A549 (cell line): ENCODE measurements at regions of chrX and their contacts with region 1.

Region 1: DNA sequence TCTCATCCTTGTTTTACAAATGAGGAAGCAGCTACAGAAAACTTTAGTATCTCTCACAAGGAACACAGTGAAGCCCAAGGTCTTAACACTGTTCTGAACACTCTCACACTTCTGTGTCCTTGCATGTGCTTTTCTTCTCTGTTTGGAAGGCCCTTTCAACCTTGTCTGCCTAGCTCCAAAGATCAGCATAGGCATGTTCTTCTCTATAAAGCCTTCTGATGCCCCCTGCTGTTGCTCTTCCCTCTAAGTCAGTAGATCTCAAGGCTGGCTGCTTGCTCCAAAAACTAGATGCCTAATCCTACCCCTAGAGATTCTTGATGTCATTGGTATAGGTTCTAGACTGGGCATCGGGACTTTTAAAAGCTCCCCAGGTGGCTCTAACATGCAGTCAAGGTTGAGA is 5.9 kb downstream of the APOO start:
- DNase-seq: peak; percentile 62 to 92
- ATAC-seq: peak; percentile 83 to 84
- H3K4me3 ChIP-seq: peak overlapping the region; percentile 22; the same call in 2 of the 3 replicates
- H3K27ac ChIP-seq: peak overlapping the region; percentile 91 to 95
- H3K4me1 ChIP-seq: peaks cover 66% of the 10 kb centered on the region
- CTCF ChIP-seq: peak; percentile 67
- EP300 ChIP-seq: no peak
- POLR2A ChIP-seq: no peak
- RAD21 ChIP-seq: peak; percentile 90 to 92

Region 2: DNA sequence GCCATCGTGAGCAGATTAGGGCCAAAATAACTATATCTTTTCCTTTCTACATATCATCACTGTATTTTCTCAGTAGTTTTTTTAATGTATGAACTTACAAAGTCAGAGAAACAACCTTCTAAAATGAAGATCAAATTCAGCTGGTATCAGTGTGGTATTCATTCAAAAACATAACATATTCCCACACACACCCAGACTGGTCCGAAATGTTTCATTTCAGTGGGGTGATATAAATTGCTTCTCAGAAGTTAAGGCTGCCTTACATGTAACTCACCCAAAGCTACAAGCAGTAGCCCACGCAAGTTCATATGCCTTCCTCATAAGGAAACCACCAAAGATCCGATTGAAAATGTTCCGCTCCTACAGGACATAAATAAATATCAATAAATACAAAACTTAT is 196.6 kb before region 1 on chrX:
- CTCF ChIA-PET with region 1: interaction called, 312 read pairs
- POLR2A ChIA-PET with region 1: no interaction called
- DNase-seq: no peak
- ATAC-seq: no peak
- H3K4me3 ChIP-seq: no peak overlapping the region
- H3K27ac ChIP-seq: no peak overlapping the region
- H3K4me1 ChIP-seq: no peaks in the 10 kb centered on the region
- CTCF ChIP-seq: no peak
- EP300 ChIP-seq: no peak
- POLR2A ChIP-seq: no peak
- RAD21 ChIP-seq: no peak

Region 3: GRCh38 chrX:23742697-23743622 is 158.8 kb before region 1 on chrX and contains the start of gene ACOT9:
- CTCF ChIA-PET with region 1: interaction called, 35 read pairs
- POLR2A ChIA-PET with region 1: interaction called, 22 read pairs
- DNase-seq: peak; percentile 89 to 98
- ATAC-seq: peak; percentile 98
- H3K4me3 ChIP-seq: peak within 1 kb of the TSS; percentile 80
- H3K27ac ChIP-seq: peak within 1 kb of the TSS; percentile 91 to 93
- H3K4me1 ChIP-seq: peaks cover 20% of the 10 kb centered on the region
- CTCF ChIP-seq: no peak
- EP300 ChIP-seq: no peak
- POLR2A ChIP-seq: peak; percentile 65
- RAD21 ChIP-seq: no peak
- polyA plus RNA-seq, gene ACOT9: 83.0 and 110 TPM in 2 replicates

Region 4: GRCh38 chrX:23766650-23767551 is 134.9 kb before region 1 on chrX:
- CTCF ChIA-PET with region 1: interaction called, 17 read pairs
- POLR2A ChIA-PET with region 1: no interaction called
- DNase-seq: no peak
- ATAC-seq: peak in 1 of 2 experiments; percentile 52; a peak in 3 of 6 replicates
- H3K4me3 ChIP-seq: no peak overlapping the region
- H3K27ac ChIP-seq: no peak overlapping the region
- H3K4me1 ChIP-seq: peaks cover 16% of the 10 kb centered on the region
- CTCF ChIP-seq: no peak
- EP300 ChIP-seq: no peak
- POLR2A ChIP-seq: no peak
- RAD21 ChIP-seq: no peak

Region 5: GRCh38 chrX:23797371-23798128 is 104.3 kb before region 1 on chrX:
- CTCF ChIA-PET with region 1: interaction called, 48 read pairs
- POLR2A ChIA-PET with region 1: no interaction called
- DNase-seq: no peak
- ATAC-seq: peak in 1 of 2 experiments; percentile 59; a peak in 3 of 6 replicates
- H3K4me3 ChIP-seq: no peak overlapping the region
- H3K27ac ChIP-seq: peak overlapping the region; percentile 88 to 98
- H3K4me1 ChIP-seq: peaks cover 34% of the 10 kb centered on the region
- CTCF ChIP-seq: no peak
- EP300 ChIP-seq: no peak
- POLR2A ChIP-seq: no peak
- RAD21 ChIP-seq: no peak

Region 6: GRCh38 chrX:23838953-23839352 is 62.9 kb before region 1 on chrX:
- CTCF ChIA-PET with region 1: interaction called, 14 read pairs
- POLR2A ChIA-PET with region 1: no interaction called
- DNase-seq: no peak
- ATAC-seq: no peak
- H3K4me3 ChIP-seq: no peak overlapping the region
- H3K27ac ChIP-seq: peak overlapping the region; percentile 5 to 47; a peak in 2 of 6 replicates
- H3K4me1 ChIP-seq: peaks cover 24% of the 10 kb centered on the region
- CTCF ChIP-seq: no peak
- EP300 ChIP-seq: no peak
- POLR2A ChIP-seq: no peak
- RAD21 ChIP-seq: no peak

Region 7: DNA sequence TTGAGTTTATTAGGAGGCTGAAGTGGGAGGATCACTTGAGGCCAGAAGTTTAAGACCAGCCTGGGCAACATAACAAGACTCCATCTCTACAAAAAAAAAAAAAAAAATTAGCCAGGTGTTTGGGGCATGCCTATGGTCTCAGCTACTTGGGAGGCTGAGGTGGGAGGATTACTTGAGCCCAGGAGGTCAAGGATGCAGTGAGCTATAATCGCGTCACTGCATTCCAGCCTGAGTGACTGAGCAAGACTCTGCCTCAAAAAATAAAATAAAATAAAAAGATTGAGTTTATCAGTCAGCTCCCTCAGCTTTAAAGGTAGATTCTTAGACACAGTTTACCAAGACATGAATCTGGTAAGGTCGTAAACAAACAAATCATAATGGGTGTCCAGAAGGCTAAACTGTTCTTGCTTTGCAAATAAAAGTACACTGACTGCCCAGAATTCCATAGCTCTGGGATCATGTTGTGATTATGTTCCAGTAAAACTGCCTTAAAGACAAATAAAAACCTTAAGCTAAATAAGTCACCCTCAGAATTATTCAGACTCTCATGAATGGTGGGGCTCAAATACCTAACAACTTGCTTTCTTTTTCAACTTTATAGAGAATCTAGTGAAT is 12.8 kb before region 1 on chrX:
- CTCF ChIA-PET with region 1: interaction called, 32 read pairs
- POLR2A ChIA-PET with region 1: interaction called, 12 read pairs
- DNase-seq: peak in 1 of 2 experiments; percentile 82
- ATAC-seq: peak; percentile 67 to 74
- H3K4me3 ChIP-seq: no peak overlapping the region
- H3K27ac ChIP-seq: peak overlapping the region; percentile 88 to 97
- H3K4me1 ChIP-seq: peaks cover 60% of the 10 kb centered on the region
- CTCF ChIP-seq: no peak
- EP300 ChIP-seq: peak; percentile 50 to 58; a peak in 2 of 5 replicates
- POLR2A ChIP-seq: no peak
- RAD21 ChIP-seq: no peak